Activated CD4-positive, alpha-beta memory T cell treated with anti-CD3 and anti-CD28 coated beads for 36 hours (primary cell): ENCODE measurements at regions of chr20 and their contacts with region 1.

Region 1: DNA sequence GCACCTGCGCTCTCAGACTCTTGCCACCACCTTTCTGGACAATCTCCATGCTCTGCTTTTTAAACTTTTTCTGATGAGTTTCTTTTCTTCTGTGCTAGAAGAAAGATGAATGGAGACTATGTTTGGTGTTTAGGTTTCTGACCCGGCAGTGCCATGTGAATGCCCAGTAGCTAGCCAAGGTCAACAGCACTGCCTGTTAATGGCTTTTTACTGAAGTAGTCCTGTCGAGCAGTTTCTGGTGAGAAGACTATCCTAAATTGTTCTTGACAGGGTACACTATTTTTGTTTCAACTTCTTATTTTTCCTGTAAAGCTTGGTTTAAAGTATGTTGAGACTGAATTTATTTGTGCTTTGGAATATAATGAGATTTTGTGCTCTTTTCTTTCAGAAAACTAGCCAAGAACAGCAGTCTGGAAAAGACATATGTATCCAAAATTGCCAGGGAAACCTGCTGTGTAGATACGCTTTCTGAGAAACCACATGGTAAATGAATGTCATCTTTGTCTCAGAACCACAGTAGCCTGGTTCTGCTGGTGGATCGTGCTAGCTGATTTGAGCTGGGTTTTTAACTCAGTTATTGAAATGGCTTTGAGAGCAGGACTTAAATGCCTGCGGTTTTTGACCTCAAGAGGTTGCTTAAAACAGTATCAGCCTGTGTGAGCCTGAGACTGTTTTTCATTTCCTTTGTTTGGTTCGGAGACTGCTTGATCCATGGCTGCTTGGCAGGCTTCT is 48.1 kb downstream of the KCNS1 start:
- DNase-seq: peak; percentile 41
- H3K4me3 Mint-ChIP-seq: no peak overlapping the region
- H3K27ac Mint-ChIP-seq: peak overlapping the region; percentile 74
- H3K4me1 Mint-ChIP-seq: peaks cover 77% of the 10 kb centered on the region
- H3K27me3 Mint-ChIP-seq: no peaks in the 10 kb centered on the region

Region 2: GRCh38 chr20:44990425-44990824 is 62.4 kb before region 1 on chr20:
- CTCF ChIA-PET with region 1: no interaction called
- POLR2A ChIA-PET with region 1: no interaction called
- intact Hi-C with region 1: no loop called
- DNase-seq: peak; percentile 85
- H3K4me3 Mint-ChIP-seq: peak overlapping the region; percentile 74
- H3K27ac Mint-ChIP-seq: peak overlapping the region; percentile 96
- H3K4me1 Mint-ChIP-seq: peaks cover 72% of the 10 kb centered on the region
- H3K27me3 Mint-ChIP-seq: no peaks in the 10 kb centered on the region

Region 3: DNA sequence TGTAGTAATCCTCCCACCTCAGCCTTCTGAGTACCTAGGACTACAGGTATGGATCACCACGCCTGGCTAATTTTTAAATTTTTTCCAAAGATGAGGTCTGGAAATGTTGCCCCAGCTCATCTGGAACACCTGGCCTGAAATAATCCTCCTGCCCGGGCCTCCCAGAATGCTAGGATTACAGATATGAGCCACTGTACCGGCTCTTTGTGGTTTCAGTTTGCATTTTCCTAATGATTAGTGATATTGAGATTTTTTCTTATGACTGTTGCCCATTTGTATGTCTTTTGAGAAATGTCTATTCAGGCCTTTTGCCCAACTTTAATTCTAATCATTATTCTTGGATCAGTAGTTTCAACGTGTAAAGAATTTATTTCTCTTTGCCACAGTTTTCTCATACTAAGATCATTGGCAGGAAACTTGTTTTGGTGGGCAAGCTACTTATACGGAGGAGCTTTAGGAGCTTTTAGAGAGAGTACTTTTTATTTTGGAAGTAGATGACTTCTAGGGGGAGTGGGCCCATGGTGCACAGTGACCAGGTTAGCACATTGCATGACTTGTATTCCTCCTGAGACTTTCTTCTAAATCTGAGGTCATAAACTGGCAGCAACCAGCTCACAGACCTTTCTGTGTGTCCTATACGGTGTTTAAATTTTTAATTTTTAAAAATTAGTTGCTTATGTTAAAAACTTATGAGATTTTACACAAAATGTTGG is 24.3 kb before region 1 on chr20:
- CTCF ChIA-PET with region 1: no interaction called
- POLR2A ChIA-PET with region 1: no interaction called
- intact Hi-C with region 1: loop called (anchors 2 kb)
- DNase-seq: peak; percentile 42
- H3K4me3 Mint-ChIP-seq: no peak overlapping the region
- H3K27ac Mint-ChIP-seq: peak overlapping the region; percentile 78
- H3K4me1 Mint-ChIP-seq: peaks cover 72% of the 10 kb centered on the region
- H3K27me3 Mint-ChIP-seq: no peaks in the 10 kb centered on the region